Natural killer cell (primary cell): ENCODE measurements at regions of chr2 and their contacts with region 1.

Region 1: GRCh38 chr2:144456680-144457079 is 63.2 kb downstream of the ZEB2 start:
- DNase-seq: peak; percentile 45 to 63
- ATAC-seq: peak; percentile 54 to 73 (median 55)
- H3K4me3 ChIP-seq: no peak overlapping the region
- H3K4me3 Mint-ChIP-seq: peak overlapping the region; percentile 47
- H3K27ac ChIP-seq: peak overlapping the region; percentile 99
- H3K27ac Mint-ChIP-seq: peak overlapping the region in 1 of 2 donors; percentile 86
- H3K4me1 ChIP-seq: peaks cover 46% of the 10 kb centered on the region
- H3K4me1 Mint-ChIP-seq: peaks cover 93 to 96% of the 10 kb centered on the region in 2 donors
- H3K27me3 ChIP-seq: no peaks in the 10 kb centered on the region
- H3K27me3 Mint-ChIP-seq: no peaks in the 10 kb centered on the region
- CTCF ChIP-seq: no peak

Region 2: DNA sequence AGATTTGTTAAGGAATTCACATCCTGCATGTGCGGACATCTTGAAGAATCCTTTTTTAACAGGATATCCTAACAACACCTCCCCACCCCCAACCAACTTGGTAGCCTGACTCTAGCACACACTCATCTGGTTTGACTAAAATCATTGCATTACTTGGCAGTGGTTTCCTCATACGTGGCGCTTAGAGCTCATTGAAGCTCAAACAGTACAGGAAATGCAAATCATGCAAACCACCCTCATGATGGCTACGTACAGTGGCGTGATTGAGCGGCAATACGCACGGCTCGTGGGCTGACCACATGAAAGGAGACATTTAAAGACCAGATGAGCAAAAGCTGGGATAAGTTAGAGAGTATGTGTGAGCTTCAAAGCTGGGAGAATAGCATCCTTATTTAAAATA is 273.0 kb before region 1 on chr2:
- intact Hi-C with region 1: loop called (anchors 1 kb)
- DNase-seq: peak; percentile 63 to 92
- ATAC-seq: peak; percentile 96 to 97 (median 96)
- H3K4me3 ChIP-seq: peak overlapping the region; percentile 15
- H3K4me3 Mint-ChIP-seq: peak overlapping the region; percentile 86
- H3K27ac ChIP-seq: peak overlapping the region; percentile 61
- H3K27ac Mint-ChIP-seq: peak overlapping the region; percentile 88 to 90
- H3K4me1 ChIP-seq: no peaks in the 10 kb centered on the region
- H3K4me1 Mint-ChIP-seq: peaks cover 24 to 30% of the 10 kb centered on the region in 2 donors
- H3K27me3 ChIP-seq: no peaks in the 10 kb centered on the region
- H3K27me3 Mint-ChIP-seq: no peaks in the 10 kb centered on the region
- CTCF ChIP-seq: no peak

Region 3: GRCh38 chr2:144332356-144333142 is 124.1 kb before region 1 on chr2:
- intact Hi-C with region 1: loop called (anchors 5 kb)
- DNase-seq: peak; percentile 90 to 95
- ATAC-seq: peak; percentile 89 to 97 (median 90)
- H3K4me3 ChIP-seq: peak overlapping the region; percentile 60
- H3K4me3 Mint-ChIP-seq: peak overlapping the region; percentile 91
- H3K27ac ChIP-seq: peak overlapping the region; percentile 58
- H3K27ac Mint-ChIP-seq: peak overlapping the region; percentile 87 to 93
- H3K4me1 ChIP-seq: peaks cover 15% of the 10 kb centered on the region
- H3K4me1 Mint-ChIP-seq: peaks cover 36 to 39% of the 10 kb centered on the region in 2 donors
- H3K27me3 ChIP-seq: no peaks in the 10 kb centered on the region
- H3K27me3 Mint-ChIP-seq: no peaks in the 10 kb centered on the region
- CTCF ChIP-seq: no peak

Region 4: GRCh38 chr2:144471305-144472045 is 14.8 kb after region 1 on chr2:
- intact Hi-C with region 1: loop called (anchors 1 kb)
- DNase-seq: peak in 1 of 2 donors; percentile 70
- ATAC-seq: peak; percentile 61 to 66 (median 64)
- H3K4me3 ChIP-seq: no peak overlapping the region
- H3K4me3 Mint-ChIP-seq: no peak overlapping the region
- H3K27ac ChIP-seq: peak overlapping the region; percentile 35
- H3K27ac Mint-ChIP-seq: no peak overlapping the region
- H3K4me1 ChIP-seq: peaks cover 26% of the 10 kb centered on the region
- H3K4me1 Mint-ChIP-seq: peaks cover 39 to 51% of the 10 kb centered on the region in 2 donors
- H3K27me3 ChIP-seq: no peaks in the 10 kb centered on the region
- H3K27me3 Mint-ChIP-seq: no peaks in the 10 kb centered on the region
- CTCF ChIP-seq: no peak

Region 5: GRCh38 chr2:144510294-144510991 is 53.8 kb after region 1 on chr2:
- intact Hi-C with region 1: loop called (anchors 1 kb)
- DNase-seq: peak; percentile 69 to 84
- ATAC-seq: peak; percentile 59 to 80 (median 69)
- H3K4me3 ChIP-seq: peak overlapping the region; percentile 39
- H3K4me3 Mint-ChIP-seq: peak overlapping the region; percentile 95
- H3K27ac ChIP-seq: peak overlapping the region; percentile 92
- H3K27ac Mint-ChIP-seq: no peak overlapping the region
- H3K4me1 ChIP-seq: peaks cover 62% of the 10 kb centered on the region
- H3K4me1 Mint-ChIP-seq: peaks cover 94 to 97% of the 10 kb centered on the region in 2 donors
- H3K27me3 ChIP-seq: no peaks in the 10 kb centered on the region
- H3K27me3 Mint-ChIP-seq: peaks cover 4 to 7% of the 10 kb centered on the region in 2 donors
- CTCF ChIP-seq: no peak